ACHN (cell line): ENCODE measurements at regions of chr7 and their contacts with region 1.

Region 1: DNA sequence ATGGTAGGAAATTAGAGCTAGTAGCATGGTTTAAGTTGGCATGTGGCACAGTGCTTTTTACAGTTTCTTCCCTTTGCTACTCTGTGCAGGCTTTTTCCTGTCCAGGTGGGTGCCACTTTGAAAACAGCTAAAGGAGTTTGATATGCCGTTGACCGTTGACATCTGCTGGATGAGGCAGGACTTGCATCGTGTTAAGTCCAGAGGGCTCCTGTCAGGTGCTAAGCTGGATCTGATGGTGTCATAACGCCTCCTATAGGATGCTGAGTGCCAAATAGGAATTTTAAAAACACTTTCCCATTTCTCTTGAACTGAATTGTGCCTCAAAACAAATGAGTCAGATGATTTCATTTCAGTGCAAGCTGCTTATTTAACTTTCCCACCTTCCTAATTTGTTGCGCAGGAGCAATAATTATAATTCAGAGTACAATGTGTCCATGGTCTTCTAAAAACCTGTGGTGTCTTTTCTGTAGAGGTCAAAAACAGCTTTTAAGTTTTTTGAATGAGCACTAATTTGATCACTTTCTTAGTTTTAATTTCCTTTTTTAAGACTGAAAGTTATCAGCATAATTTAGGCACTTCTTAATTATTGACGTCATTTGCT is 178.3 kb downstream of the CDCA7L start:
- DNase-seq: peak; percentile 90

Region 2: DNA sequence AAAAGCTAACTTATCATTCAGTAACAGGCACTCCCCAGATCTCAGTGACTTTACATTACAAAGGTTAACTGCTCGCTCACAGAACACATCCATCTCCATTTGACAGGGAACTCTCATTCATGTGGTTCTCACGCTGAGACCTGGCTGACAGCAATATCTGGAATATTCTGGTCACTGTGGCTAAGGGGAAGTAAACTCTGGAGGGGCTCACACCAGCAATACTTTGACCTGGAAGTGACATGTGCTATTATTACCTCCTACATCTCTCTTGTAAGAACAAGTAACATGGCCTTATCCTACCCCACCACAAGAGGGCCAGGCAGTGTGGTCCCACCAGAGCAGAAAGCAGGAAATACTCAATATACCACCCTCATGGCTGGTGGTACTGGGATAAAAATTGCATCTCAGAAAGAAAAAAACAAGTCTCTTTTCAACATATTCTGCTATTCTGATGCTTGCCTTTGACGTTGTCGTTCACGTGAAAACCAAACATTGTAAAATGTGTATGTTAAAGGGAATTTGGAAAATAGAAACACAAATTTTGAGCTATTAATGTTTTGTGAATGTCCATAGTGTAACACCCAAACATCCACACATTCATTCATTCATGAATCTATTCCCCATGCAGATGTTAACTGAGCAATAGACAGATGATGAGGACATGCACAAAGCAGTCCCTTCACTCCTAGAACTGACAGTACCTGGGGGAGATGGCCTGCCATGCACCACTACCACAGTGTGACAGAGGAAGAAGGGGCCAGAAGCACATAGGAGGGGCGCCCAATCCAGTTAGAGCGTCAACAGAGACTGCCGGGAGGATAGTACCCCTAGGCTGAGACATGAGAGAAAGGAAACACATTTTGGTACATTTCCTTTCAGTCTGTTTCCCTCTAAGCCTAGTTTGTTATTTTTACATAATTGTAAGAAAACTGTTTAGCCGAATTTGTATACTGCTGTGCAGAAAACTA is 505.5 kb before region 1 on chr7:
- in situ Hi-C with region 1: loop called (anchors 25 kb)
- DNase-seq: peak; percentile 74

Region 3: GRCh38 chr7:21542891-21543527 is 224.4 kb before region 1 on chr7 and contains the start of gene DNAH11:
- in situ Hi-C with region 1: no loop called
- DNase-seq: peak; percentile 66

Region 4: GRCh38 chr7:21806388-21806787 is 39.0 kb after region 1 on chr7:
- in situ Hi-C with region 1: no loop called
- DNase-seq: no peak